Caco-2 (cell line): ENCODE measurements at regions of chr1 and their contacts with region 1.

Region 1: GRCh38 chr1:200738740-200739498 is at the start of gene CAMSAP2:
- DNase-seq: peak; percentile 85 to 87
- H3K4me3 ChIP-seq: peak within 1 kb of the TSS; percentile 70
- H3K4me3 Mint-ChIP-seq: peak within 1 kb of the TSS; percentile 93
- H3K27ac Mint-ChIP-seq: peak within 1 kb of the TSS; percentile 95
- H3K4me1 ChIP-seq: peaks cover 11% of the 10 kb centered on the region
- H3K4me1 Mint-ChIP-seq: peaks cover 12% of the 10 kb centered on the region
- H3K27me3 ChIP-seq: no peaks in the 10 kb centered on the region
- H3K27me3 Mint-ChIP-seq: no peaks in the 10 kb centered on the region
- CTCF ChIP-seq: no peak
- total RNA-seq, gene CAMSAP2: 23.4 and 24.4 TPM in 2 replicates

Region 2: DNA sequence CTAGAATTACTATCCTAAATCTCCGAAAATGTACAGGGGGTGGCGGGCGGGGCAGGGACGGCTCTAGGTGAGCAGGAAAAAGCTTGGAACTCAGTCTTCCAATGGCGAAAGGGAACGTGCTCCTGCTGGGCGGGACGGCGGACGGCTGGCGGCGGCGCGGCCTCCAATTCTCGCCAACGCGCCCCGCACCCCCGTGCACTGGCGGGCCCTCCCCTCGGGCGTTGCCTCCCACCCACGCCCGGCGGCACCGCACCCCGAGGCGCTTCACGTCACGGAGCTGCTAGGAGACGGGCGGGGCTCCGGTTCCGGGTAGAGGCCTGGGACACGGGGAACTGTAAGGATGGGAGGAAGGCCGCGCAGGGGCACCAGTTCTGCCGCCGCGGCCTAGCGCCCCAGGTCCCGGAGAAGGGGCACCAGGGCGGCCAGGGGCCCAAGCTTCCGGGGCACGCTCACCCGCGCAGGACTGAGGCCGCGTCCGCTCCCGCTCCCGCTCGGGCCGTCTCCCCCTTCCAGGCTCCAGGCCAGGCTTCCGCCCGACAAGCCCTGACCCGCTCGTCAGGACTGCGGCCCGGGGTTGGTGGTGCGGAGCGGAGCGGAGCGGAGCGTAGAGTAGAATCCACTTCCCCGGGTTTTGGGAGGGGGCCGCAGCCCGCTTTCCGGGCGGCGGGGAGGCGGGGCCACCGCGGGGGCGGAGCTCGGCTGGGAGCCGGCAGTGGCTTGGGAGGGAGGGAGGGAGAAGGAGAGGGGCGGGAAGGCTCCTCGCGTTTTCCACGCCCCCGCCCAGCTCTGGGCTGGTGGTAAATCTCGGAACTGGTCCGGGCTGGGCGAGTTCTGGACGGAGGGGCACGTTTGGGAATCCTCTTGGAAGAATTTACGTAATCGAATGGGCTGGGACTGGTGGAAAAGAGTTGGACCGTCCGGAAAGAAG is 69.3 kb before region 1 on chr1 and contains the start of gene DDX59:
- CTCF ChIA-PET with region 1: no interaction called
- POLR2A ChIA-PET with region 1: interaction called, 7 read pairs
- intact Hi-C with region 1: loop called (anchors 2 kb)
- DNase-seq: peak; percentile 97
- H3K4me3 ChIP-seq: peak within 1 kb of the TSS; percentile 97
- H3K4me3 Mint-ChIP-seq: peak within 1 kb of the TSS; percentile 99
- H3K27ac Mint-ChIP-seq: peak within 1 kb of the TSS; percentile 99
- H3K4me1 ChIP-seq: peaks cover 16% of the 10 kb centered on the region
- H3K4me1 Mint-ChIP-seq: peaks cover 10% of the 10 kb centered on the region
- H3K27me3 ChIP-seq: no peaks in the 10 kb centered on the region
- H3K27me3 Mint-ChIP-seq: no peaks in the 10 kb centered on the region
- CTCF ChIP-seq: no peak
- total RNA-seq, gene DDX59: 13.5 and 16.3 TPM in 2 replicates

Region 3: DNA sequence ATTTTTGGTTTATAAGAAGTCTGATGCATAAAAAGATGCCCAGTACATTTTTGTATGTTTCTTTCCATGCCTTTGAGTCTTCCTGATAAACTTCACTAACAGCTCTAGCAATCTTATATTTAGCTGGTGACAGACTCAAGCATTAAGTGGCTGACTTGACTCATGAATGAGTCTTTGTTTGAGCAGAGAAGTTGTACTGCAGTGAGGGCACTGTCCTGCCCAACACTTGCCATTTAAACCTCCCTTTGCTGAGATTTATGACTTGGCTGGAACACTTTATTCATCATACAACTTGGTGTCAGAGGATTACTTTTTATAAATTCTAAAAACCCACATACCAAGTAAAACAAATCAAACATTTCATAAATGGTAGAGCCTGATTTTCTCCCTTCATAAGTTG is 14.9 kb before region 1 on chr1:
- CTCF ChIA-PET with region 1: no interaction called
- POLR2A ChIA-PET with region 1: no interaction called
- intact Hi-C with region 1: no loop called
- DNase-seq: no peak
- H3K4me3 ChIP-seq: no peak overlapping the region
- H3K4me3 Mint-ChIP-seq: no peak overlapping the region
- H3K27ac Mint-ChIP-seq: no peak overlapping the region
- H3K4me1 ChIP-seq: no peaks in the 10 kb centered on the region
- H3K4me1 Mint-ChIP-seq: no peaks in the 10 kb centered on the region
- H3K27me3 ChIP-seq: no peaks in the 10 kb centered on the region
- H3K27me3 Mint-ChIP-seq: peaks cover 3% of the 10 kb centered on the region
- CTCF ChIP-seq: no peak

Region 4: GRCh38 chr1:200751717-200752116 is 12.8 kb after region 1 on chr1:
- CTCF ChIA-PET with region 1: no interaction called
- POLR2A ChIA-PET with region 1: interaction called, 10 read pairs
- intact Hi-C with region 1: no loop called
- DNase-seq: no peak
- H3K4me3 ChIP-seq: no peak overlapping the region
- H3K4me3 Mint-ChIP-seq: no peak overlapping the region
- H3K27ac Mint-ChIP-seq: no peak overlapping the region
- H3K4me1 ChIP-seq: no peaks in the 10 kb centered on the region
- H3K4me1 Mint-ChIP-seq: peaks cover 14% of the 10 kb centered on the region
- H3K27me3 ChIP-seq: no peaks in the 10 kb centered on the region
- H3K27me3 Mint-ChIP-seq: no peaks in the 10 kb centered on the region
- CTCF ChIP-seq: no peak

Region 5: GRCh38 chr1:200802865-200803512 is 64.1 kb after region 1 on chr1:
- CTCF ChIA-PET with region 1: no interaction called
- POLR2A ChIA-PET with region 1: no interaction called
- intact Hi-C with region 1: loop called (anchors 2 kb)
- DNase-seq: peak; percentile 86
- H3K4me3 ChIP-seq: no peak overlapping the region
- H3K4me3 Mint-ChIP-seq: no peak overlapping the region
- H3K27ac Mint-ChIP-seq: no peak overlapping the region
- H3K4me1 ChIP-seq: peaks cover 6% of the 10 kb centered on the region; the same call in 1 of the 2 replicates
- H3K4me1 Mint-ChIP-seq: peaks cover 8% of the 10 kb centered on the region
- H3K27me3 ChIP-seq: no peaks in the 10 kb centered on the region
- H3K27me3 Mint-ChIP-seq: no peaks in the 10 kb centered on the region
- CTCF ChIP-seq: peak; percentile 92 to 97